A673 (cell line): ENCODE measurements at regions of chr5 and their contacts with region 1.

Region 1: GRCh38 chr5:63094730-63095129 is 516.1 kb downstream of the LRRC70 start:
- DNase-seq: no peak
- H3K4me3 ChIP-seq: no peak overlapping the region
- H3K27ac ChIP-seq: no peak overlapping the region
- H3K4me1 ChIP-seq: no peaks in the 10 kb centered on the region
- H3K27me3 ChIP-seq: peaks cover 12% of the 10 kb centered on the region
- CTCF ChIP-seq: no peak

Region 2: GRCh38 chr5:61831736-61832135 is 1263.0 kb before region 1 on chr5:
- CTCF ChIA-PET with region 1: no interaction called
- POLR2A ChIA-PET with region 1: no interaction called
- intact Hi-C with region 1: no loop called
- DNase-seq: no peak
- H3K4me3 ChIP-seq: no peak overlapping the region
- H3K27ac ChIP-seq: no peak overlapping the region
- H3K4me1 ChIP-seq: peaks cover 4% of the 10 kb centered on the region
- H3K27me3 ChIP-seq: no peaks in the 10 kb centered on the region
- CTCF ChIP-seq: no peak

Region 3: GRCh38 chr5:62791059-62791458 is 303.7 kb before region 1 on chr5:
- CTCF ChIA-PET with region 1: no interaction called
- POLR2A ChIA-PET with region 1: no interaction called
- intact Hi-C with region 1: loop called (anchors 5 kb)
- DNase-seq: peak; percentile 51
- H3K4me3 ChIP-seq: no peak overlapping the region
- H3K27ac ChIP-seq: no peak overlapping the region
- H3K4me1 ChIP-seq: no peaks in the 10 kb centered on the region
- H3K27me3 ChIP-seq: peaks cover 9% of the 10 kb centered on the region
- CTCF ChIP-seq: peak; percentile 69

Region 4: GRCh38 chr5:63135291-63135690 is 40.6 kb after region 1 on chr5:
- CTCF ChIA-PET with region 1: no interaction called
- POLR2A ChIA-PET with region 1: no interaction called
- intact Hi-C with region 1: no loop called
- DNase-seq: no peak
- H3K4me3 ChIP-seq: no peak overlapping the region
- H3K27ac ChIP-seq: no peak overlapping the region
- H3K4me1 ChIP-seq: no peaks in the 10 kb centered on the region
- H3K27me3 ChIP-seq: peaks cover 46% of the 10 kb centered on the region
- CTCF ChIP-seq: no peak

Region 5: DNA sequence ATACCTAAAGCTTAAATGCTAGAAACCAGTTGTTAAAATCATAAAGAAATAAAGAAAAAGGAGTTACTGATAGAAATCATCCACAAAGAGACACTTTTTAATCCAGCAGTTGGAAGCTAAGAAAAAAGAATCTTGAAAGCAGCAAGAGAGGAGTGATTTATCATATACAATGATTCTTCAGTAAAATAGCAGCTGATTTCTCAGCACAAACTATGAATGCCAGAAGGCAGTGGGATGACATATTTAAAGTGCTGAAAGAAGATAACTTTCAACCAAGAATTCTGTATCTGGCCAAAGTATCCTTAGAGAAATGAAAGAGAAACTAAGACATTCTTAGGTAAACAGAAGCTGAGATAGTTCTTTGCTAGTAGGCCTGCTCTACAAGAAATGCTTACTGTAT is 501.5 kb after region 1 on chr5:
- CTCF ChIA-PET with region 1: no interaction called
- POLR2A ChIA-PET with region 1: no interaction called
- intact Hi-C with region 1: no loop called
- DNase-seq: no peak
- H3K4me3 ChIP-seq: no peak overlapping the region
- H3K27ac ChIP-seq: no peak overlapping the region
- H3K4me1 ChIP-seq: no peaks in the 10 kb centered on the region
- H3K27me3 ChIP-seq: no peaks in the 10 kb centered on the region
- CTCF ChIP-seq: no peak